Mammary epithelial cell (primary cell): ENCODE measurements at regions of chr1 and their contacts with region 1.

Region 1: GRCh38 chr1:204363335-204364124 is 3.8 kb upstream of the PLEKHA6 start:
- DNase-seq: peak; percentile 59
- H3K4me3 ChIP-seq: peak overlapping the region; percentile 36 to 53 (median 41)
- H3K27ac ChIP-seq: peak overlapping the region; percentile 6
- H3K4me1 ChIP-seq: peaks cover 7% of the 10 kb centered on the region
- H3K27me3 ChIP-seq: no peaks in the 10 kb centered on the region
- CTCF ChIP-seq: peak; percentile 96 to 98

Region 2: GRCh38 chr1:204128964-204129896 is 234.3 kb before region 1 on chr1:
- CTCF ChIA-PET with region 1: no interaction called
- dilution Hi-C with region 1: no loop called
- in situ Hi-C with region 1: no loop called
- intact Hi-C with region 1: loop called (anchors 1 kb)
- DNase-seq: peak; percentile 31
- H3K4me3 ChIP-seq: peak overlapping the region; percentile 18 to 45 (median 31)
- H3K27ac ChIP-seq: no peak overlapping the region
- H3K4me1 ChIP-seq: peaks cover 35% of the 10 kb centered on the region
- H3K27me3 ChIP-seq: no peaks in the 10 kb centered on the region
- CTCF ChIP-seq: peak; percentile 66 to 87

Region 3: GRCh38 chr1:204213668-204214662 is 149.6 kb before region 1 on chr1 and contains the start of gene GOLT1A:
- CTCF ChIA-PET with region 1: interaction called, 4 read pairs
- dilution Hi-C with region 1: loop called (anchors 5 kb)
- in situ Hi-C with region 1: loop called (anchors 5 to 10 kb)
- intact Hi-C with region 1: loop called (anchors 1 kb)
- DNase-seq: peak; percentile 73
- H3K4me3 ChIP-seq: peak within 1 kb of the TSS; percentile 1 to 38 (median 34)
- H3K27ac ChIP-seq: no peak within 1 kb of the TSS
- H3K4me1 ChIP-seq: peaks cover 11% of the 10 kb centered on the region
- H3K27me3 ChIP-seq: no peaks in the 10 kb centered on the region
- CTCF ChIP-seq: peak; percentile 76 to 77
- total RNA-seq, gene GOLT1A: 0.59 TPM in 1 of 2 donors, not detected in the other

Region 4: GRCh38 chr1:204263254-204263910 is 100.1 kb before region 1 on chr1:
- CTCF ChIA-PET with region 1: no interaction called
- dilution Hi-C with region 1: loop called (anchors 5 kb)
- in situ Hi-C with region 1: loop called in 1 of 2 experiments (anchors 10 kb)
- intact Hi-C with region 1: loop called (anchors 1 kb)
- DNase-seq: no peak
- H3K4me3 ChIP-seq: no peak overlapping the region
- H3K27ac ChIP-seq: no peak overlapping the region
- H3K4me1 ChIP-seq: no peaks in the 10 kb centered on the region
- H3K27me3 ChIP-seq: no peaks in the 10 kb centered on the region
- CTCF ChIP-seq: no peak